ENCODE measurements at regions of chr7 and their contacts with region 1.

Region 1: GRCh38 chr7:106022193-106022821 is 59.2 kb downstream of the CDHR3 start:
- DNase-seq: peak; percentile 62 to 96 (median 84)
- ATAC-seq: peak; percentile 85
- H3K4me3 ChIP-seq: peak overlapping the region; percentile 11 to 20
- H3K4me3 Mint-ChIP-seq: peak overlapping the region; percentile 59
- H3K27ac ChIP-seq: peak overlapping the region; percentile 80 to 82
- H3K27ac Mint-ChIP-seq: peak overlapping the region; percentile 95
- H3K4me1 ChIP-seq: peaks cover 48% of the 10 kb centered on the region
- H3K4me1 Mint-ChIP-seq: peaks cover 68% of the 10 kb centered on the region
- H3K27me3 ChIP-seq: peaks cover 0 to 3% of the 10 kb centered on the region in 2 experiments
- H3K27me3 Mint-ChIP-seq: no peaks in the 10 kb centered on the region
- CTCF ChIP-seq: no peak

Region 2: GRCh38 chr7:104943502-104944343 is 1078.6 kb before region 1 on chr7:
- CTCF ChIA-PET with region 1: no interaction called
- POLR2A ChIA-PET with region 1: no interaction called
- intact Hi-C with region 1: loop called (anchors 2 to 10 kb)
- DNase-seq: peak; percentile 40 to 86 (median 69)
- ATAC-seq: peak; percentile 24
- H3K4me3 ChIP-seq: peak overlapping the region; percentile 10 to 18
- H3K4me3 Mint-ChIP-seq: peak overlapping the region; percentile 83
- H3K27ac ChIP-seq: peak overlapping the region; percentile 98
- H3K27ac Mint-ChIP-seq: peak overlapping the region; percentile 100
- H3K4me1 ChIP-seq: peaks cover 52% of the 10 kb centered on the region
- H3K4me1 Mint-ChIP-seq: peaks cover 64% of the 10 kb centered on the region
- H3K27me3 ChIP-seq: no peaks in the 10 kb centered on the region
- H3K27me3 Mint-ChIP-seq: no peaks in the 10 kb centered on the region
- CTCF ChIP-seq: no peak

Region 3: GRCh38 chr7:105678811-105679495 is 343.4 kb before region 1 on chr7:
- CTCF ChIA-PET with region 1: interaction called, 3 read pairs
- POLR2A ChIA-PET with region 1: interaction called, 3 read pairs
- intact Hi-C with region 1: loop called (anchors 5 kb)
- DNase-seq: peak in 1 of 9 experiments; percentile 26
- ATAC-seq: no peak
- H3K4me3 ChIP-seq: no peak overlapping the region
- H3K4me3 Mint-ChIP-seq: peak overlapping the region; percentile 33
- H3K27ac ChIP-seq: peak overlapping the region in 1 of 2 experiments; percentile 80
- H3K27ac Mint-ChIP-seq: peak overlapping the region; percentile 84
- H3K4me1 ChIP-seq: peaks cover 39% of the 10 kb centered on the region
- H3K4me1 Mint-ChIP-seq: peaks cover 70% of the 10 kb centered on the region
- H3K27me3 ChIP-seq: no peaks in the 10 kb centered on the region
- H3K27me3 Mint-ChIP-seq: no peaks in the 10 kb centered on the region
- CTCF ChIP-seq: no peak

Region 4: DNA sequence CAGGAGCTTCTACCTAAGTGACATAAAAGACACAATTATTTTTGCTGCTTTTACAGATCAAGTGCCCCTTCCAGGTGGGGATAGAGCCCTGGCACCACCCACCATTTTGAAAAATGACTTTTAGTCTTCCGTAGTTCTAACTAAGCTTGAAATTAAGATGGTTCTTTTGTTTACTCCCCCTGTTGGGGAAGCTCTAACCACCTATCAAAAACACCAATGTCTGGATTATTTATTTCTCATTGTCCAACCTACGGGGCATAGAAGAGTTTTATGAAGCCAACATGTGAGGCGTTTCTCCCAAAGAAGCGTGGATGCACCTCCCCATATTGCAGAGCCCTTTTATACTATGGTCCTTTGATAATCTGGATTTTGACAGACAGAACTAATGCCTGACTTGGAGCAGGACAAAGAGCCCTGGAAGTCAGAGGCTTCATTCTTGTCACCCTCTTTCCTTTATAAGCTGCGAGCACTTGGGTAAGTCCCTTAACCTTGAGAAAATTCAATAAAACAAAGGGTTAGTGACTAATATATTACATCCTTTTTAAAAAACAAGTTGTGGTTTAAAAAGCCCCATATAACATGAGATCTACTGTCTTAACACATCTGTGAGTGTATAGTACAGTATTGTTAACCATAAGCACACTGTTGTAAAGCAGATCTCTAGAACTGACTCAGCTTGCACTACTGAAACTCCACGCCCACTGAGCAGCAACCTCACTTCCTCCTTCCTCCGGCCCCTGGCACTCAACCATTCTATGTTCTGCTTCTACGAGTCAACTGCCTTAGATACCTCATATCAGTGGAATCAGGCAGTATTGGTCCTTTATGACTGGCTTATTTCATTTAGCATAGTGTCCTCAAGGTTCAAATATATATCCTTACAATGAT is 213.4 kb before region 1 on chr7:
- CTCF ChIA-PET with region 1: no interaction called
- POLR2A ChIA-PET with region 1: no interaction called
- intact Hi-C with region 1: loop called in 1 of 2 experiments (anchors 2 kb)
- DNase-seq: peak; percentile 19 to 90 (median 71)
- ATAC-seq: peak; percentile 90
- H3K4me3 ChIP-seq: peak overlapping the region in 1 of 2 experiments; percentile 6
- H3K4me3 Mint-ChIP-seq: no peak overlapping the region
- H3K27ac ChIP-seq: peak overlapping the region; percentile 23 to 87
- H3K27ac Mint-ChIP-seq: peak overlapping the region; percentile 24
- H3K4me1 ChIP-seq: peaks cover 36% of the 10 kb centered on the region
- H3K4me1 Mint-ChIP-seq: peaks cover 58% of the 10 kb centered on the region
- H3K27me3 ChIP-seq: no peaks in the 10 kb centered on the region
- H3K27me3 Mint-ChIP-seq: no peaks in the 10 kb centered on the region
- CTCF ChIP-seq: no peak

Region 5: DNA sequence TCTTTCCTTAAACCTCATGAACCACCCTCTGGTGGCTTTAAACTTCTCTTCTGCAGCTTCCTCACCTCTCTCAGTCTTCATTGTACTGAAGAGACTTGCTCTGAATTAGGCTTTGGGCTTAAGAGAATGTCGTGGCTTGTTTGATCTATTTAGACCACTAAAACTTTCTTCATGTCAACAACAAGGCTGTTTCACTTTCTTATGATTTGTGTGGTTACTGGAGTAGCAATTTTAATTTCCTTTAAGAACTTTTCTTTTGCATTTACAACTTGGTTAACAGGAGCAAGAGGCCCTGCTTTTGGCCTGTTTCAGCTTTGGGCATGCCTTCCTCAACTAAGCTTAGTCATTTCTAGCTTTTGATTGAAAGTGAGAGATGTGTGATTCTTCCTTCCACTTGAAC is 97.4 kb before region 1 on chr7:
- CTCF ChIA-PET with region 1: no interaction called
- POLR2A ChIA-PET with region 1: interaction called, 7 read pairs
- intact Hi-C with region 1: loop called in 1 of 2 experiments (anchors 2 kb)
- DNase-seq: peak in 3 of 9 experiments; percentile 16 to 73 (median 51)
- ATAC-seq: peak; percentile 86
- H3K4me3 ChIP-seq: no peak overlapping the region
- H3K4me3 Mint-ChIP-seq: peak overlapping the region; percentile 38
- H3K27ac ChIP-seq: peak overlapping the region in 1 of 2 experiments; percentile 40
- H3K27ac Mint-ChIP-seq: peak overlapping the region; percentile 78
- H3K4me1 ChIP-seq: peaks cover 21% of the 10 kb centered on the region
- H3K4me1 Mint-ChIP-seq: peaks cover 35% of the 10 kb centered on the region
- H3K27me3 ChIP-seq: no peaks in the 10 kb centered on the region
- H3K27me3 Mint-ChIP-seq: no peaks in the 10 kb centered on the region
- CTCF ChIP-seq: no peak

Region 6: DNA sequence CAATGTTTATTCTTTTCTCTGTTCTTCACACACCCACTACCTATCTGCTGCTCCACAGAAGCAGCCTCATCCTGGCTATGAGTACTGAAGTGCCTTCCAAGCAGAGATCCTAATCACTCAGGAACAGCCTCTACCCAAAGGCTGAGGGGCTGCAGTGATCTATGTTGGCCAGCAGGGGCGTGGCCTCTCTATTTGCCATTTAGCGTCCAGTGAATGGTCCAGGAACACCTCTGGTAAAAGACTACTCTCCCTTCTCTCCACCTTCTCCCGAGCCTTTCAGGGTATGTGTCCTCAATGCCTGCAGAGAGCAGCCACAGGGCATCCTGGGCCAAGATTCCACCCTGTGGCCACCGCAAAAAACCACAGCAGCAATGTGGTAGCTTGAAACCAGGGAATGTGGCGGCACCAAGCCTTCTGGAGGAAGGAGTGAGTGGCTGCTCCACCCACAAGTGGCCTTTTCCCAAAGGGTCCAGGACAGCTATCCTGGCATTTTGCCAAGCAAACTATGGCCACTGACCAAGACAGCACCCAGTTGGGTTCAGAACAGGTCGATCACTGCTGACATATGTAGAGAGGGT is 18.9 kb after region 1 on chr7:
- CTCF ChIA-PET with region 1: interaction called, 51 read pairs
- POLR2A ChIA-PET with region 1: interaction called, 34 read pairs
- intact Hi-C with region 1: loop called (anchors 1 kb)
- DNase-seq: peak in 3 of 9 experiments; percentile 40 to 59 (median 51)
- ATAC-seq: peak; percentile 32
- H3K4me3 ChIP-seq: no peak overlapping the region
- H3K4me3 Mint-ChIP-seq: peak overlapping the region; percentile 6
- H3K27ac ChIP-seq: no peak overlapping the region
- H3K27ac Mint-ChIP-seq: peak overlapping the region; percentile 68
- H3K4me1 ChIP-seq: peaks cover 28% of the 10 kb centered on the region
- H3K4me1 Mint-ChIP-seq: peaks cover 39% of the 10 kb centered on the region
- H3K27me3 ChIP-seq: no peaks in the 10 kb centered on the region
- H3K27me3 Mint-ChIP-seq: no peaks in the 10 kb centered on the region
- CTCF ChIP-seq: peak; percentile 61